ENCODE measurements at regions of chr21 and their contacts with region 1.

Region 1: DNA sequence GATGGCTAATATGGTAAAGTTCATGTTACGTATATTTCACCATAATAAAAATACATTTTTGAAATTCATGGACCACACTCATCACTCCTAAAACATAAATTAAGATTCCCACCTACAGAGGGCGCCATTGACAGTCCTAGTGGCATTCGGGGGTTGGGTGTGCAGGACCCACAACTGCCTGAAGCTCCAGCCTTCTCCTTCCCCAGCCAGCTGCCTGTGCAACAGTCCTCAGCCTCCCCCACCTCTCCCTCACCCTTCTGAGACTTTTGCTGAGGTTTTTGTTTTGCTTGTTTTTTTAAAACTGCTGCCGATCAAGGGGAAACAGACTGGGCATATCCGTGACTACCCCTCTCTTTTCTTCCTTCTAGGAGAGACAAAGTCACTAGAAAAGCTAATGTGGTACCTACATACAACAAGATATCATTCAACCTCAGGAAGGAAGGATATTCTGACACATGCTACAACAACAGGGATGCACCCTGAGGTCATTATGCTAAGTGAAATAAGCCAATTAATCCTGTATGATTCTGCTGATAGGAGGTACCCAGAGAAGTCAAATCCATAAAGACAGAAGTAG is 9.2 kb upstream of the EVA1C start:
- DNase-seq: peak; percentile 58
- ATAC-seq: peak; percentile 97
- H3K4me3 Mint-ChIP-seq: no peak overlapping the region
- H3K27ac Mint-ChIP-seq: no peak overlapping the region; the same call in 1 of the 2 replicates
- H3K4me1 Mint-ChIP-seq: peaks cover 13% of the 10 kb centered on the region
- H3K27me3 Mint-ChIP-seq: peaks cover 7% of the 10 kb centered on the region
- CTCF ChIP-seq: peak; percentile 59; the same call in 1 of the 2 replicates

Region 2: GRCh38 chr21:32348654-32349587 is 54.4 kb before region 1 on chr21:
- CTCF ChIA-PET with region 1: no interaction called
- POLR2A ChIA-PET with region 1: no interaction called
- DNase-seq: no peak
- ATAC-seq: no peak
- H3K4me3 Mint-ChIP-seq: no peak overlapping the region
- H3K27ac Mint-ChIP-seq: no peak overlapping the region
- H3K4me1 Mint-ChIP-seq: no peaks in the 10 kb centered on the region
- H3K27me3 Mint-ChIP-seq: no peaks in the 10 kb centered on the region
- CTCF ChIP-seq: no peak

Region 3: DNA sequence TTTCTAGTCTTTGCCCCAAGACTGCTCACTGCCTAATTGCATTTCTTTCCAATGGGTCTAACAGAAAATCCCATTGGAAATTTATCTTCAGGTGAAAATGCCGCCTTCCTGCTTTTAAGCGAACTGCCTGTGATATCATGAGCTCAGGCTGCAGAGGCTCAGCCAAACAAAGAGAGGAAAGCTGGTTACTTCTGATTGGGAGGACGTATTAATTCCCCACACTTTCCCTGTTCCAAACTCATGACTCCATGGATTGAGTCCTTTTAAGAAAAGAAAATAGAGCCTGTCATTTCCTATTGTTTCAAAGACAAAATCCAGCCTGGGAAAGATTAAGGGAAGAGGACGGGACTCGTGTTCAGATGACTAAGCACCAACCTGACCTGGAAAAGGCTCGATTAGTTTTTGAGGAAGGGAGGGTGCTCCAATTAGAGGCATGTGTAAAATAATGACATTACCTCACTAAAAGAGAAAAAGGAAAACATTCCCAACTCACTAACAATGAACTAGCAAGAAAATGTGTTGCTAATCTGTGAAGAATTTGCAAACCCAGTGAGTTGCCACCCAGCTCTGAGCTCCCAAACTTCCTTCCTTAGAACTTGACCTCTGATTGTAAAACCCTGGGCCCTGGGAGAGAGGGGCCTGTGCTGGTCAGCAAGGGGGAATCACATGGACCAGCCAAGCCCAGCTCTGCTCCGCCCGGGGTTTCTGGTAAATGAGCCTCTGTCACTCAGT is 120.9 kb after region 1 on chr21:
- CTCF ChIA-PET with region 1: interaction called, 14 read pairs
- POLR2A ChIA-PET with region 1: no interaction called
- DNase-seq: no peak
- ATAC-seq: peak; percentile 29; the same call in 1 of the 2 replicates
- H3K4me3 Mint-ChIP-seq: no peak overlapping the region
- H3K27ac Mint-ChIP-seq: peak overlapping the region; percentile 59; the same call in 1 of the 2 replicates
- H3K4me1 Mint-ChIP-seq: peaks cover 38% of the 10 kb centered on the region
- H3K27me3 Mint-ChIP-seq: 0 out of 2 replicates have a peak, but pooled peaks cover 2% of the 10 kb centered on the region
- CTCF ChIP-seq: no peak

Region 4: GRCh38 chr21:32569261-32570230 is 166.3 kb after region 1 on chr21:
- CTCF ChIA-PET with region 1: interaction called, 66 read pairs
- POLR2A ChIA-PET with region 1: no interaction called
- DNase-seq: peak; percentile 88
- ATAC-seq: peak; percentile 88
- H3K4me3 Mint-ChIP-seq: peak overlapping the region; percentile 90
- H3K27ac Mint-ChIP-seq: 0 out of 2 replicates have a peak overlapping the region, but pooled peaks have one; percentile 64
- H3K4me1 Mint-ChIP-seq: peaks cover 40% of the 10 kb centered on the region
- H3K27me3 Mint-ChIP-seq: no peaks in the 10 kb centered on the region; the same call in 1 of the 2 replicates
- CTCF ChIP-seq: peak; percentile 74

Region 5: GRCh38 chr21:32604464-32604863 is 201.2 kb after region 1 on chr21:
- CTCF ChIA-PET with region 1: interaction called, 141 read pairs
- POLR2A ChIA-PET with region 1: no interaction called
- DNase-seq: peak; percentile 87
- ATAC-seq: peak; percentile 84
- H3K4me3 Mint-ChIP-seq: peak overlapping the region; percentile 53
- H3K27ac Mint-ChIP-seq: peak overlapping the region; percentile 95
- H3K4me1 Mint-ChIP-seq: peaks cover 65% of the 10 kb centered on the region
- H3K27me3 Mint-ChIP-seq: no peaks in the 10 kb centered on the region; the same call in 1 of the 2 replicates
- CTCF ChIP-seq: no peak